ENCODE measurements at regions of chr11 and their contacts with region 1.

Region 1: DNA sequence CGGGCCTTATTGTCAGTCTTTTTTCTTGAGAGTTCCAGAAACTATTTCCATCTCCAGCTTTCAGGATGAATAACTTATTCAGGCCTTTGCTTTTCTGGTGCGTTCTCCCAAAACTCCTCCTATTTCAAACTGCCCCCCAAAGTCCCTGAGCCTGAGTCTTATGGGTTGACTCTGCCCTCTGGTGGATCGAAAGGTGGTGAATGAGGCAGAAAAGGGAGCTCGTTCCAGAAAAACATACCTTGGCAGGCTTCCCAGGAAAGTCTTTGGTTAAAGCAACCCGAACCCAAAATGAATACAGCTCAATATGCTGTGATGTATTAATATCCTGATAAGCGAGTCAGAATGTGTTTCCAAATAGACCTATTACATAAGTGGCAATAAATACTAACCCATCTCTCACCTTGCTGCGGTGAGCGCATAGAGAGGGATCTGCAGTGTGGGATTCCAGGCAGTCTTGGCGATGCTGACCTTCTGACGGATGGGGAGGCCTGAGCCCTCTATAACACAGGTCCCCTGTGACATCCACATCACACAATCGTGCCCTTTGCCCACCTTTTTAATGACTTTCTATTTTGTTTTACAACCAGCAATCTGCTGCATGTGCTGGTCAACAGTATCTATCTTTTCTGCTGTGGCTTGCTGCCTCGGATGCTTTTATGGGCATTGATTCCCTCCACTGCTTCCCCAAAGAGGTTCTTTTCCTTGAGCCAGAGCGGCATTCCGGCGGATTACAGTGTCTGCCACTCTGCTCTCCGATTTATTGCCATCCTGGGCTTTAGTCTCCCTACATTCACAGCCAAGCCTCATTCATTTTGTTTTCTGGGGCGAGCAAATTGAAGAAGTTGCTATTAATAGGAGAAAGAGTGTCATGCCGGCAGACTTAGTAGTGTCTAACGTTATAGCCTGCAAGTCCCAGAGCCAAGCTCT is 756.8 kb downstream of the NTM start:
- DNase-seq: peak; percentile 7
- H3K4me3 Mint-ChIP-seq: no peak overlapping the region
- H3K27ac Mint-ChIP-seq: no peak overlapping the region
- H3K4me1 Mint-ChIP-seq: no peaks in the 10 kb centered on the region
- H3K27me3 Mint-ChIP-seq: peaks cover 7% of the 10 kb centered on the region

Region 2: DNA sequence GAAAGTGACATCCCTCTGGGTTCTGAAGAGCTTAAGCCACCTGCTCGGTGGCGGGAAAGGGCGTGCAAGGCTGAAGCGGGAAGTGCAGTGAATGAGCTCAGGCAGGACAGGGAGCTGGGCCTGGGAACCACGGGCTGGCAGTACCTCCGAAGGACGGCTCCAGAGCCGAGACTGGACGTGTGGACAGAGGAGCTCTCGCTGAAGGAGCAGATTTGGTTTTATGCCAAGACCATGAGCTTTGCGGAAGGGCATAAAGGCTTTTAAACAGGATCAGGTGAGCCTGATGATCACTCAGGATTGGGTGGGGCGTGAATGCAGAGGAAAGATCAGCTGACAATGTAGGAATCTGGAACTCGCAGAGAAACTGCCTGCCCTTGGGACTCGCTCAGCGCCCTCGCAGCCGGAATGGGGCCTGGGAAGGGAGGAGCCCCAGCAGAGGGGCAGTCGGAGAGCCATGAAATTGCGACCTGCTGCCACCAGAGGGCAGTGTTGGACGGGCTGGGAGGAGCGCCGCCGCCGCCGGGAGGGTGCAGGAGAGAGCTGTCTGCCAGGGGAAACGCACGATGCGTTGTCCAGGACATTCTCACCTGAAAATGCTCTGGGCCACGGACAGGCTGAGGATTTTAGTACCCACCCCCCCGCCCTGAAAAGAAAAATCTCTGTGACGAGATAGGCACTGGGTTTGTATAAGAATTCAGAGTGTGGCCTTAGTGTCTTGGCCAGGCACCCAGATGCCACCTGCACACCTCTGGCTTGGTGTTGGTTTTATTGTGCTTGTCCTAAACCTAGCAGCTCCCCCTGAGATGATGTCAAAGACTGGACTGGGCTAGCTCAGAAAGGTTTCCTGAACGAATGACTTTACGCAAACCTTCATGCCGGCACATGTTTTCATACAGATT is 432.5 kb before region 1 on chr11:
- CTCF ChIA-PET with region 1: interaction called, 3 read pairs
- intact Hi-C with region 1: loop called (anchors 2 kb)
- DNase-seq: peak; percentile 75
- H3K4me3 Mint-ChIP-seq: no peak overlapping the region
- H3K27ac Mint-ChIP-seq: no peak overlapping the region
- H3K4me1 Mint-ChIP-seq: no peaks in the 10 kb centered on the region
- H3K27me3 Mint-ChIP-seq: peaks cover 42% of the 10 kb centered on the region

Region 3: DNA sequence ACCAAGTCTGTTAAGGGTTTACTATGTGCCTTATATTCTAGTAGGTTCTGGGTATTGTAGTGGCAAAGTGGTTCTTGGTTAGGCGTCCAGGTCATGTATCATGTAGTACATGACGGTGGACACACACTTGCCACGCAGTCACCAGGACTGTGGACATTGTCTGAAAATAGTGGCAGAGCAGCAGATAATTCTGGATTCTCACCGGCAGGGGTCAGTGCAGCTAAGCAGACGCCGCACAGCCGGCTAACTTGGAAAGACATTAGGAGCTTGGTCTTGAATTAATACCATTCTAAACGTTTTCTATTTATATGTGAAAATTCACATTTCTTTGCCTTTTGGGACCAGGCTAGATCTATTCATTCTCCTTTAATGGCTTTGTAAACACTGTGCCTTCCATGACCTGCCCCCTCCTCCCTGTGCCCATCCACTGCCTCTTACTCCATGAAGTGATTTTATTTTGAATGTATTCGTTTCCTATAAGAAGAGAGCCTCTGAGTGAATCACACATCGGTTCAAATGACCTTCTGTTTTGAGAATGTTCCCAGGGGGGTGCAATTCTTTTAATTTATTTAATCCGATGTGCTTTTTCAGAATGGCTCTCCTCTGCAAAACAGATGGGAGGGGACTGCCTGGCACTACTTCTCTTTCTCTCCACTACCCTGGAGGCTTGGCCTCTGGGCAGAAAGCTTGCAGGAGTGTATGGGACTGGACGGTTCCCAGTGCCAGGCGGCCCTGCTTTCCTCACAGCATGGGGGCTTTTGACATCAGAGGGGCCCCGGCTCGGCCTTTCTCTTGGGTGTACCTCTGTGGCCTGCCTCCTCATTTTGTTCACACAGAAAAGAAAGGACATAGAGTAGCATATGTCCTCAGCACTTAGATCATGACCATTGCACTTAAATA is 378.8 kb before region 1 on chr11:
- CTCF ChIA-PET with region 1: interaction called, 5 read pairs
- intact Hi-C with region 1: loop called (anchors 1 kb)
- DNase-seq: peak; percentile 58
- H3K4me3 Mint-ChIP-seq: no peak overlapping the region
- H3K27ac Mint-ChIP-seq: no peak overlapping the region
- H3K4me1 Mint-ChIP-seq: no peaks in the 10 kb centered on the region
- H3K27me3 Mint-ChIP-seq: peaks cover 2% of the 10 kb centered on the region

Region 4: DNA sequence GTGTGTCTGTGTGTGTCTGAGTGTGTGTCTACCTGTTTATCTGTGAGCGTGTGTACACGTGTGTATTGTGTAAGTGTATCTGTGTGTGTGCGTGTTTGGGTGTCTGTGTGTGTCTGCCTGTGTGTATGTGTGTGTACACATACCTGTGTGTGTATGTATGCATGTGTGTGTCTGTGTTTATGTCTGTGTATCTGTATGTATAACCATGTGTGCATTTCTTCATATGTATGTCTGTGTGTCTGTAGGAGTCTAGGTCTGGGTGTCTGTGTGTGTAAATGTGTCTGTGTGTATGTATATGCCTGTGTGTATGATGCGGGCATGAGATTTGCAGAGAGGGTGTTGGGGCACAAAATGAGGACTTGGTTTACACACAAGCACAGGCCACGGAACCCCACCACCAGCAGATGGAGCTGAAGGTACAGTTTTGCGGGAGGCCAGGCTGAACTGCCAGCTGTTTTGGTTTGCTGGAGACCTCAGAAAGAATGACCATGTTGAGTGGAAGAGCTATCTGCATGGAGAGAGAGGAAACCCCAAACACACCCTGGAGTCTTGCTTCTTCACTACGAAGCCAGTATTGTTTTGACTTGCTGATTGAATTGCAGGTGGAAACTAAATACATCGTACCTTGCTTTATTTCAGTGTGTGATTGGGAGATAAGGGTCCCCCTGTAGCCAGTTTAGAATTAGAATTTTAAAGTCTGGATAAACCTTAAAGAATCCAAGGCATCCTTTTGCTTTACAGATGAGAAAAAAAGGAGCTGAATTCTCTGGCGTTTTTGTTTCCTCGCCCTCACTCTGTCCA is 259.6 kb before region 1 on chr11:
- CTCF ChIA-PET with region 1: interaction called, 4 read pairs
- intact Hi-C with region 1: loop called (anchors 5 kb)
- DNase-seq: peak; percentile 20
- H3K4me3 Mint-ChIP-seq: no peak overlapping the region
- H3K27ac Mint-ChIP-seq: no peak overlapping the region
- H3K4me1 Mint-ChIP-seq: no peaks in the 10 kb centered on the region
- H3K27me3 Mint-ChIP-seq: peaks cover 3% of the 10 kb centered on the region

Region 5: GRCh38 chr11:131910523-131911387 is 216.5 kb before region 1 on chr11:
- CTCF ChIA-PET with region 1: no interaction called
- intact Hi-C with region 1: loop called (anchors 10 kb)
- DNase-seq: no peak
- H3K4me3 Mint-ChIP-seq: no peak overlapping the region
- H3K27ac Mint-ChIP-seq: no peak overlapping the region
- H3K4me1 Mint-ChIP-seq: no peaks in the 10 kb centered on the region
- H3K27me3 Mint-ChIP-seq: peaks cover 54% of the 10 kb centered on the region